GM13977 (cell line): ENCODE measurements at regions of chr3 and their contacts with region 1.

Region 1: DNA sequence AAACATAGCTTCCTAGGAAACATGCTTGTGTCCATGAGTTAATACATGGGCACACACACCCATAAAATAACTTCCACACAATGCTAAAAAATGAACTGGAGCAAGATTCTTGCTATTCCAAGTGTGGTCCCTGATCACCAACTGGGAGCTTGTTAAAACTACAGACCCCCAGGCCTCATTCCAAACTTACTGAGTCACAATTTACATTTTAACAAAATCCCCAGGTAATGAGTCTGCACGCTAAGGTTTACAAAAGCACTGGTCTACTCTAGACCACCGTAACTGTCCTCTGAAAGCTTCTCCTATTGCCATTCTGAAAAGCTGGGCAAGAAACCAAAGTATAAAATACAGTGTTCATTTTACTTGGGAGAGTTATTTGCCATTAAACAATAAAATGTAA is 45.4 kb downstream of the IGF2BP2 start:
- DNase-seq: no peak
- CTCF ChIP-seq: no peak

Region 2: DNA sequence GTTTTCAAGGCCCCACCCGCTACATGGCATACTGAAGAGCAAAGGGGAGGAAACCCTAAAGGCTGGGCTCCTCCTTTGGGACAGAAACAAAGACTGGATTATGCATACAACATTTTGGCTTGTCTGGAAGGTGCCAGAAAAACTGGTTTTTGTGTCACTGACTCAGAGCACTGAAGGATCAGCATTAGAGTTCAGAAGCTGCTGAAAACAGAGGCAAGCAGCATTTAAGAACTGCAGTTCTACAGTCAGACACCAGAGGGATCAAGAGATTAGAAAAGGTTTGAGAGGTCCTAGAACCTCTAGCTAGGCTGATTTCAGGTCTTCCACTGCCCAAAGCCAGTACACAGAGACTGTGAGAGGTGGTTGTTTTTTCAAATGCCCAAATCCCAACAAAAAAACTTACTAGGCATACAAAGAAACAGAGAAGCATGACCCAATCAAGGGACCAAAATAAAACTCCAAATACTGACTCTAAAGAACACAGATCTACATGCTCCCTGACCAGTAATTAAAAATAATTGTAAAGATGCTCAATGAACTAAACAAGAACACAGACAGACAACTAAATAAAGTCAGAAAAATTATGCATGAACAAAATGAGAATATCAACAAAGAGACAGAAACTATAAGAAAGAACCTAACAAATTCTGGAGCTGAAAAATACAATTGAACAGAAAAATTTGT is 102.2 kb before region 1 on chr3:
- in situ Hi-C with region 1: loop called (anchors 10 kb)
- DNase-seq: peak; percentile 69
- CTCF ChIP-seq: peak; percentile 63

Region 3: GRCh38 chr3:186021673-186022362 is 242.4 kb after region 1 on chr3:
- in situ Hi-C with region 1: no loop called
- DNase-seq: no peak
- CTCF ChIP-seq: no peak

Region 4: GRCh38 chr3:187714404-187714979 is 1935.0 kb after region 1 on chr3:
- in situ Hi-C with region 1: no loop called
- DNase-seq: peak; percentile 80
- CTCF ChIP-seq: peak; percentile 93